ENCODE measurements at regions of chr12 and their contacts with region 1.

Region 1: GRCh38 chr12:49358483-49359141 is 8.7 kb upstream of the SPATS2 start:
- DNase-seq: peak; percentile 51 to 54
- H3K4me3 ChIP-seq: no peak overlapping the region
- H3K27ac ChIP-seq: no peak overlapping the region
- H3K4me1 ChIP-seq: no peaks in the 10 kb centered on the region
- H3K27me3 ChIP-seq: no peaks in the 10 kb centered on the region
- CTCF ChIP-seq: peak; percentile 87

Region 2: GRCh38 chr12:49288412-49288853 is 70.2 kb before region 1 on chr12:
- CTCF ChIA-PET with region 1: interaction called, 8 read pairs
- POLR2A ChIA-PET with region 1: no interaction called
- intact Hi-C with region 1: loop called (anchors 1 kb)
- DNase-seq: peak in 1 of 2 experiments; percentile 55
- H3K4me3 ChIP-seq: no peak overlapping the region
- H3K27ac ChIP-seq: no peak overlapping the region
- H3K4me1 ChIP-seq: no peaks in the 10 kb centered on the region
- H3K27me3 ChIP-seq: no peaks in the 10 kb centered on the region
- CTCF ChIP-seq: peak; percentile 93

Region 3: GRCh38 chr12:49331380-49332222 is 27.0 kb before region 1 on chr12:
- CTCF ChIA-PET with region 1: interaction called, 15 read pairs
- POLR2A ChIA-PET with region 1: no interaction called
- intact Hi-C with region 1: loop called (anchors 1 kb)
- DNase-seq: peak in 1 of 2 experiments; percentile 47
- H3K4me3 ChIP-seq: no peak overlapping the region
- H3K27ac ChIP-seq: no peak overlapping the region
- H3K4me1 ChIP-seq: no peaks in the 10 kb centered on the region
- H3K27me3 ChIP-seq: no peaks in the 10 kb centered on the region
- CTCF ChIP-seq: peak; percentile 76

Region 4: GRCh38 chr12:49410818-49411217 is 52.2 kb after region 1 on chr12:
- CTCF ChIA-PET with region 1: no interaction called
- POLR2A ChIA-PET with region 1: no interaction called
- intact Hi-C with region 1: no loop called
- DNase-seq: no peak
- H3K4me3 ChIP-seq: no peak overlapping the region
- H3K27ac ChIP-seq: no peak overlapping the region
- H3K4me1 ChIP-seq: no peaks in the 10 kb centered on the region
- H3K27me3 ChIP-seq: no peaks in the 10 kb centered on the region
- CTCF ChIP-seq: no peak

Region 5: DNA sequence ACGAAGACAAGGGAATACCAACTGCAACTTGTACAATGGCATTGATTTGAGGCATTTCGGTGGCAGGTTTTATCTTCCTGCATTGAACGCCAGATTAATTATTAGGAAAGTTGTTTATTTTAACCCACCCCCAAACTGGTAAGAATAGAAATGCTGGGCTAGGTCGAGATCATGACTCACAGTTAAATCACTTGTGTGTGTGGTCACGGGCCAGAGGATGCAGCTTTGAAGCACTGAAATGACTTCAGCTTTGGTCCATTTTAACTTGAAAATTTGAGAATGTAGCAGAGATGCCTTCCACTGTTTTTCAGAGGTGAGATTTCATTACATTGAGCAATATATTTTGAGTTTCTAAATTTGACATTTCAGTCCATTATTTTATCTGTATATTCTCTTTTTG is 156.7 kb after region 1 on chr12:
- CTCF ChIA-PET with region 1: interaction called, 51 read pairs
- POLR2A ChIA-PET with region 1: interaction called, 9 read pairs
- intact Hi-C with region 1: loop called (anchors 1 kb)
- DNase-seq: peak in 1 of 2 experiments; percentile 56
- H3K4me3 ChIP-seq: no peak overlapping the region
- H3K27ac ChIP-seq: no peak overlapping the region
- H3K4me1 ChIP-seq: peaks cover 11% of the 10 kb centered on the region
- H3K27me3 ChIP-seq: no peaks in the 10 kb centered on the region
- CTCF ChIP-seq: no peak

Region 6: GRCh38 chr12:49527361-49528130 is 168.9 kb after region 1 on chr12:
- CTCF ChIA-PET with region 1: interaction called, 3 read pairs
- POLR2A ChIA-PET with region 1: interaction called, 22 read pairs
- intact Hi-C with region 1: no loop called
- DNase-seq: no peak
- H3K4me3 ChIP-seq: no peak overlapping the region
- H3K27ac ChIP-seq: no peak overlapping the region
- H3K4me1 ChIP-seq: no peaks in the 10 kb centered on the region
- H3K27me3 ChIP-seq: no peaks in the 10 kb centered on the region
- CTCF ChIP-seq: no peak

Region 7: DNA sequence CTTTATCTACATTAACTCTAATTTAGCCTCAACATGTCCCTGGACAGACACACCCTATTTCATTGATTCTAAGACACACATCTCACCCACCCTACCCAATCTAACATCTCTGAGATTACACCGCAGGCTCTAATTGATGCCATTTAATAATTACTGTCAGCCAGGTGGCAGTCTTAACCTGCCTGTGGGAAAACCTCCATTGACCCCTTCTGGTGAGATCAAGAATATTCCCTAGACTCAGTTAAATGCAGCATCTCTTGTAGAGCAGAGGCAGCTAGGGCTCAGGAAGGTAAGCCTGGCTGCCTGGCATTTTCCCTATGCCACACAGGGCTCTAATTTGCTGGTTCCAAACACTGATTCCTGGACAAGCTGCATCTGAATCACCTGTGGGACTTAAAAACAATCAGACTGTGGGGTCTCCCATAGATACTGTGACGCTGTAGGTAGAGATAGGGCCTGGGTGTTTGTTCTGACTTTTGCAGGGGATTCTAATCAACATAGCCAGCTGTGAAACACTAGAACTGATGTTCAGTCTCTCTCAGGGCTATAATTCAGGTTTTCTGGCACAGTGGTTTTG is 195.0 kb after region 1 on chr12:
- CTCF ChIA-PET with region 1: interaction called, 15 read pairs
- POLR2A ChIA-PET with region 1: no interaction called
- intact Hi-C with region 1: loop called (anchors 1 kb)
- DNase-seq: peak in 1 of 2 experiments; percentile 52
- H3K4me3 ChIP-seq: no peak overlapping the region
- H3K27ac ChIP-seq: no peak overlapping the region
- H3K4me1 ChIP-seq: no peaks in the 10 kb centered on the region
- H3K27me3 ChIP-seq: peaks cover 4% of the 10 kb centered on the region; the same call in 1 of the 2 replicates
- CTCF ChIP-seq: peak; percentile 77

Region 8: DNA sequence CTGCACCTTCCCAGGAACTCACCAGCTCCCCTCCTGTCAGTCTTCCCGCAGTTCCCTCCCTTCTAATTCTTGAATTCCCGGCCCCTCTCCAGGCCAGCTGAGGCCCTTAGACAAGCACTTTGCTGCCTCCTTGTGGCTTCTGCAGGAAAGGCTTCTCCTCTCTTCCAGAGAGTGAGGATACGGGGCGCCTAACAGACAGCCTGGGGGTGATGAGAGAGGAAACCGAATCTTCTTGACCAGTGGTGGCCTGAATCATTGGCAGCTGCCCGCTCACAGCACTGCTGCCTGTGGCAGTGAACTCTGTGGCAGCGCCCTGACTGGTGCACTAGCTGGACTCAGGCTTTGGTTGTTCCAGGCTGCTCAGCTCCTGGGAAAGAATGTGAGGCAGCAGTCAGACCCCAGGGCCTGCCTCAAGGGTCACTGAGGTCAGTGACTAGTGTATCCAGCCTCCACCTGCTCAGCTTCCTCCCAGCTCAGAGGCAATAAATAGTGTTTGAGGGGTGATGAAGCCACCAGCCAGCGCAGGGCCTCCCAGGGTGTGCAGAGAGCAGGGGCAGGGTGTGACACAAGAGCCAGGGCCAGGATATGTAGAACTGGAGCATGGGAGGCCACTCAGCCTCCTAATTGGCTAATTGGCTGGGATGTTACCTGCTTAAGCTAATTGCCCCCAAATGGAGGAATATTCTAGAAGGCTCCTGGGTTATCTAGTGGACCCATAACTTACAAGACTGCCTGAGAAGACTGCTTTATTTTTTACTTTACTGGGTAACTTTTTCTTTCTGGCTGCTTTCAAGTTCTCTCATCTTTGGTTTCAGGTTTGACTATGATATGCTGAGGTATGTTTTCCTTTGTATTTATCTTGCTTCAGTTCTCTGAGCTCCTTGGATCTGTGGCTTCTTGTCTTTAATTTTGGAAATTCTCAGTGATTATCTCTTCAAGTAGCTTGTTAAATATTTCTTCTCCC is 222.2 kb after region 1 on chr12:
- CTCF ChIA-PET with region 1: interaction called, 29 read pairs
- POLR2A ChIA-PET with region 1: no interaction called
- intact Hi-C with region 1: loop called (anchors 1 kb)
- DNase-seq: peak; percentile 65 to 66
- H3K4me3 ChIP-seq: no peak overlapping the region
- H3K27ac ChIP-seq: no peak overlapping the region
- H3K4me1 ChIP-seq: no peaks in the 10 kb centered on the region
- H3K27me3 ChIP-seq: no peaks in the 10 kb centered on the region
- CTCF ChIP-seq: peak; percentile 83